Activated B cell treated with CpG ODN at 0.5 μM for 24 hours (primary cell): ENCODE measurements at regions of chr14 and their contacts with region 1.

Region 1: DNA sequence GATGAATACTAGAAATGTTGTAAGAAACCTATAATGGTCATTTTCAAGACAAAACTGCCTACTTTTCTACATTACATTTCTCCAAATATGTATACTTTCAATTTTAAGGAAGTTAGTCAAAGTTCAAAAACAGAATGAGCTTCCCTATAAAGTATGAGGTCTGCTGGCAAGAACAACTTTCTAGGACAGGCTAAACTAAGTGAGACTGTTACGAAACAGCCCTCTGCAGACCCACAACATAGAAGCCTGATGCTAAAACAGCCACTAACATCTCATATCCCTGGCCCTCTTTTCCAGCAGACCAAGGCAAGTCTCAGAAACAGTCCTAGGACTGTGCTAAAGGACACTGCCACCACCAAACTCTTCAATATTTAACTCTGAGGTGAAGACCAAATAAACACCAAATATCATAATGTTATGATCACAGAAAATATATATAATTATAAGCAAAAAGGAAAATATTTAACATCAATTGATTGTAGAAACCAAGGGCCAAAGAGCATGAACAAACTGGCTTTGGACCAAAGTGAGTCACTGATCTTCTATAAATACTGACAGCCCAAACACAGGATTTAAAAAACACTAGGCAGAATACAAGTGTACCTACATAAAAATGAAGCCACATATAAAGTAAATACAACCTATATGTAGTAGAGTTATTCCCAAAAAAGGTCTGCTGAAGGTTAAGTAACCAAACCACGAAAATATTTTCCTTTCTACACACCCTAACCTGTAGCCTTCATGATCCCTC is 27.7 kb downstream of the PPP4R3A start:
- DNase-seq: no peak
- ATAC-seq: no peak
- H3K4me3 Mint-ChIP-seq: no peak overlapping the region
- H3K27ac Mint-ChIP-seq: no peak overlapping the region
- H3K4me1 Mint-ChIP-seq: peaks cover 71% of the 10 kb centered on the region
- H3K27me3 Mint-ChIP-seq: no peaks in the 10 kb centered on the region
- CTCF ChIP-seq: no peak

Region 2: DNA sequence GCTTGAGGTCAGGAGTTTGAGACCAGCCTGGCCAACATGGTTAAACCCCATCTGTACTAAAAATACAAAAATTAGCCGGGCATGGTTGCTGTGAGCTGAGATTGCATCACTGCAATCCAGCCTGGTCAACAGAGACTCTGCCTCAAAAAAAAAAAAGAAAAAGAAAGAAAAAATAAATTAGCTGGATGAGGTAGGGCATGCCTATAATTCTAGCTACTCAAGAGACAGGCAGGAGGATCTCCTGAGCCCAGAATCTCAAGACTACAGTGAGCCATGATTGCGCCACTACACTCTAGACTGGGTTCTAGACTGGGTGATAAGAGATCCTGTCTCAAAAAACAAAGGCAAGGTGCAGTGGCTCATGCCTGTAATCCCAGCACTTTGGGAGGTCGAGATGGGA is 10.7 kb after region 1 on chr14:
- CTCF ChIA-PET with region 1: no interaction called
- POLR2A ChIA-PET with region 1: interaction called, 9 read pairs
- intact Hi-C with region 1: loop called (anchors 1 kb)
- DNase-seq: no peak
- ATAC-seq: no peak
- H3K4me3 Mint-ChIP-seq: no peak overlapping the region
- H3K27ac Mint-ChIP-seq: no peak overlapping the region
- H3K4me1 Mint-ChIP-seq: peaks cover 71% of the 10 kb centered on the region
- H3K27me3 Mint-ChIP-seq: no peaks in the 10 kb centered on the region
- CTCF ChIP-seq: no peak

Region 3: DNA sequence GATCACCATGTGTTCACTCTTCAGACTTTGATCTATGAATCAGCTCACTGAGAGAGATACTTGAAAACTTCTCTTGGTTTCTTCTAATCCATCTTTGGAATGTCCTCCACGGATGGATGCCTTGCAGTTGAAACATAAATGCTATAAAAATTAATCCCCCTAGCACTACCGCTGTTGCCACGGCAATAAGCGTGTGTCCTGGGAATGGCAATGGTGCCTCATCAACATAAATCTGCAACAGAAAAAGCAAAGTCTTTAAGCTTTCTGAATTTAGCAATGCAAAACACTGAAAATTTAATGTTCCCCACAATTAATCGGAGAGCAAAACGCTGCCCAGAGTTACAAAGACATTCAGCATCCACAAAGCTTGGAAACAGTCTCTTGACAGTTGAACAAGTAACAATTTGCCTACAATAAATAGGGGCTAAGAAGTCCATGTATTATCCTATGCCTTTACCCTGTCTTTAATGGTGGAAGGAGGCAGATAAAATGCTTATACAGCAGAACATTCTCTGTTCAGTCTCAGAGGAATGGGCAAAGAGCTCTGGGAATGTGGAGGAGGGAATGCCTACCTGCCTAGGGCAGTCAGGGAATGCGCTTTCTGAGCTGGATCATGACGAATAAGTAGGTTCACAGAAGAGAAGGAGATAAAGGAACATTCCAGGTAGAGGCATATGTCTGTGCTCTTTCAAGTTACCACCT is 98.6 kb after region 1 on chr14:
- CTCF ChIA-PET with region 1: no interaction called
- POLR2A ChIA-PET with region 1: no interaction called
- intact Hi-C with region 1: no loop called
- DNase-seq: no peak
- ATAC-seq: no peak
- H3K4me3 Mint-ChIP-seq: no peak overlapping the region
- H3K27ac Mint-ChIP-seq: no peak overlapping the region
- H3K4me1 Mint-ChIP-seq: no peaks in the 10 kb centered on the region
- H3K27me3 Mint-ChIP-seq: peaks cover 14% of the 10 kb centered on the region
- CTCF ChIP-seq: no peak